ENCODE measurements at regions of chr9 and their contacts with region 1.

Region 1: GRCh38 chr9:89808076-89808755 is 203.4 kb downstream of the GADD45G start:
- DNase-seq: no peak
- ATAC-seq: no peak

Region 2: DNA sequence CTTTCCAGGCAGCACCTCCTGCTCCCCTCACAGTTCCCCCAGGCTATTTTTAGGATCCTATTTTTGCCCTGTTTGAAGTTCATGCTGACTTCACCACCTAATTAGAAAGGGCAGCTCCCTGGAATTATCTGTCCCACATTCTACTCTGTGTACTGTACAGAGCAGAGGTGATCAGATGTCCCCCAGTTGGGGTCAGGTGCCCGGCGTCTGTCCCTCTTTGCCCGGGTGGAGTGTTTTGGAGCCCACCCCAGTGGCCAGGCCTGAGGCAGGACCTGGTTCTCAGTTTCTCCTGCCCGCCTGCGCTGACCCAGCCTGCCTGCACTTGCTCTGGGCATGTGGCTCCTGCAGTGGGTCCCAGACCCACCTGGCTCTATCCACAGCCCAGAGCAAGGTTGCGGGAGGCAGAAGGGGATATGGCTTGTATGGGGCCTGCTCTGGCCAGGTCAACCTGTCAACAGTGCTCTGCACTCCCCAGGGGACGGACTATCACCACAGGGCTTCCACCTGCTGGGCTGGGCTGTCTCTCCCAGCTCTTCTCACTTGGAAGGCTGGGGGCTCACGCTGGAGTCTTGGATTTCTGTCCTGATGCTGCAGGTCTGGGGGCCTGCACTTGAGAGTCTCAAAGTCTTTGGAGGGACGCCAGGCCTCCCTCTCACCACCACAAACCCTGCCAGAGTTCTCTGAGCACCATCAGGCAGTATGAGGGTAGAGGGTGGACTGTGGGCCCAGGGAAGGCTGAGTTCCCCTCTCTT is 64.9 kb after region 1 on chr9:
- intact Hi-C with region 1: loop called (anchors 2 kb)
- DNase-seq: no peak
- ATAC-seq: peak; percentile 79

Region 3: GRCh38 chr9:89919169-89919681 is 111.0 kb after region 1 on chr9:
- intact Hi-C with region 1: loop called (anchors 10 kb)
- DNase-seq: no peak
- ATAC-seq: peak; percentile 91

Measured in Right ventricle myocardium inferior (tissue), 1 donor.